Activated naive CD4-positive, alpha-beta T cell treated with anti-CD3 and anti-CD28 coated beads for 36 hours (primary cell): ENCODE measurements at regions of chr1 and their contacts with region 1.

Region 1: GRCh38 chr1:64923294-64923721 is 43.0 kb downstream of the JAK1 start:
- DNase-seq: peak; percentile 72
- H3K4me3 Mint-ChIP-seq: peak overlapping the region; percentile 25
- H3K27ac Mint-ChIP-seq: peak overlapping the region; percentile 87
- H3K4me1 Mint-ChIP-seq: peaks cover 96% of the 10 kb centered on the region
- H3K27me3 Mint-ChIP-seq: no peaks in the 10 kb centered on the region

Region 2: DNA sequence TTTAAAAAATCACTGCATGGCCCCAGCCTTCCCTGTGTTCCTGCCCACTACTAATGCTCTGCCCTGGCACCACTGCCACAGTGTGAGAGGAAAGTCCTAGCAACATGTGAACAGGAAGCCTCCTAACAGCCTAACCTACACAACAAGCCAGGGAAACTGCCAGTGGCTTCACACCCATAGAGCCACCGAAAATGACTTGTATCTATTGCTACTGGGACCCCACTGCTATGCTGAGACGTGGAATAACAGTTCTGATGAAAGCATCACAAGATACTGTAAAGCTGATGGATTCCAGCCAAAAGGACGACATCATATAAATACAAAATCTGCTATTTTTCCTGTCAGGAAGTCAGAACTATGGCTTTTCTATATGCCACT is 31.9 kb before region 1 on chr1:
- CTCF ChIA-PET with region 1: interaction called, 3 read pairs
- intact Hi-C with region 1: loop called (anchors 1 kb)
- DNase-seq: peak; percentile 51
- H3K4me3 Mint-ChIP-seq: no peak overlapping the region
- H3K27ac Mint-ChIP-seq: no peak overlapping the region
- H3K4me1 Mint-ChIP-seq: peaks cover 90% of the 10 kb centered on the region
- H3K27me3 Mint-ChIP-seq: no peaks in the 10 kb centered on the region

Region 3: GRCh38 chr1:64906447-64906846 is 16.9 kb before region 1 on chr1:
- CTCF ChIA-PET with region 1: interaction called, 11 read pairs
- intact Hi-C with region 1: loop called (anchors 1 kb)
- DNase-seq: peak; percentile 60
- H3K4me3 Mint-ChIP-seq: no peak overlapping the region
- H3K27ac Mint-ChIP-seq: peak overlapping the region; percentile 34
- H3K4me1 Mint-ChIP-seq: peaks cover 88% of the 10 kb centered on the region
- H3K27me3 Mint-ChIP-seq: no peaks in the 10 kb centered on the region

Region 4: DNA sequence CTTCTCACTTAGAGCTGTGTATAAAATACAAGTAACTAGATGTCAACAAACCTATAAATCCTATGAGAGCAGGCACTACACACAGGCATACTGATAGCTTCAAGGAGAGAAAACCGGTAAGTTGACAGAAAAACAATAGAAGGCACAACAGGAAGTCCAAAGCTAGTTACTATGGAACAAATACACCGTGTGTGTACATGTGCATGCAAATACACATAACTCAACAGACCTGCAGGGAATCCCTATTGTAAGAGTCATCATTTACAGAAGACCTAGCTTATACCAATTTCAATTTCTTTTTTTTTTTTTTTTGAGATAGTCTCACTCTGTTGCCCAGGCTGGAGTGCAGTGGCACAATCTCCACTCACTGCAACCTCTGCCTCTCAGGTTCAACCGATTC is 16.7 kb after region 1 on chr1:
- CTCF ChIA-PET with region 1: interaction called, 3 read pairs
- intact Hi-C with region 1: loop called (anchors 1 kb)
- DNase-seq: no peak
- H3K4me3 Mint-ChIP-seq: no peak overlapping the region
- H3K27ac Mint-ChIP-seq: no peak overlapping the region
- H3K4me1 Mint-ChIP-seq: peaks cover 75% of the 10 kb centered on the region
- H3K27me3 Mint-ChIP-seq: no peaks in the 10 kb centered on the region

Region 5: GRCh38 chr1:64956733-64957441 is 33.6 kb after region 1 on chr1:
- CTCF ChIA-PET with region 1: interaction called, 10 read pairs
- intact Hi-C with region 1: loop called (anchors 1 kb)
- DNase-seq: peak; percentile 79
- H3K4me3 Mint-ChIP-seq: no peak overlapping the region
- H3K27ac Mint-ChIP-seq: no peak overlapping the region
- H3K4me1 Mint-ChIP-seq: peaks cover 63% of the 10 kb centered on the region
- H3K27me3 Mint-ChIP-seq: no peaks in the 10 kb centered on the region

Region 6: GRCh38 chr1:65067491-65068201 is 144.3 kb after region 1 on chr1:
- CTCF ChIA-PET with region 1: no interaction called
- intact Hi-C with region 1: loop called (anchors 1 kb)
- DNase-seq: peak; percentile 71
- H3K4me3 Mint-ChIP-seq: peak overlapping the region; percentile 87
- H3K27ac Mint-ChIP-seq: peak overlapping the region; percentile 95
- H3K4me1 Mint-ChIP-seq: peaks cover 51% of the 10 kb centered on the region
- H3K27me3 Mint-ChIP-seq: no peaks in the 10 kb centered on the region